ENCODE measurements at regions of chr18 and their contacts with region 1.

Region 1: DNA sequence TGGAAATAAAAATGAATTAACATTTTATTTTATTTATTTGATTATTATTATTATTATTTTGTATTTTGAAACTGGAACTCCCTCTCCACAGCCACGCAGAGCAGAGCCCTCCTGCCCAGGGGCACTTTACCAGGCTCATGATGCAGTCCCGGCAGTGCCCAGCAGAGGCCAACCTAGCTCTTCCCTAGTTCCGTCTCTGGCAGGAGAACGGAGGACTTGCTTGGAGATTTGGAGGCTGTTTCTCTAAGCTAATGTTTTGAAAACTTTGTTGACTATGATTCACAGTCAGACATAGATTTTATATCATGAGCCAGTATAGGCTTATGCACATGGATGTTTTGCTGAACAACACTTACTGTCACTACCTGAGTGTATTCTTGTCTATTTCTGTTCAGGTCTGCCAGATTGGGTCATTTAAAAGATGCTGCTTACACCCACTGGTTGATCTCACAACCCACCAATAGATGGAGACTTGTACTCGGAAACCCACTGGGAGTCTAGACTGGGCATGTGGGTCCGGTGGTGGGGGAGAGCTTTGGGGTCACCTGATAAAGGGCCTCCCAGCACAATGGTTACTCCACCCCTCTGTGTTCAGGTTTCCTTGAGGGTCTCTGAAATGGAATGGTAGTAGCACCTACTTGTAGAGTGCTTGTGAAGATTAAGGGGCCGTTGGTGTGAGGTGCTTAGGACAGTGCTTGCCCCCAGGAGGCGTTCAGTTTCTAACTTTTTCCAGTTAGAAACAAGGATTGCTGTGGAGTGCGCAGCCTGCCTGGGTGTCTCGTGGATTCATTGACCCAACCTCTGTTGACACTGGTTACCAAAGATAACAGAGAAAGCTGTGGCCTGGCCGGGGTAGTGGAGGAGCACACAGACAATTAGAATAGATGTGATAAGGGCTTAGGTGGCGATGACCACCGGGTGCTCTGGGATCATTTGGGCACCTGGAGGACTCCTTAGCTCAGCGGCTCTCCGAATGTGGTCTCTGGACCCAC is 177.3 kb downstream of the HAUS1 start:
- DNase-seq: peak; percentile 55 to 69 (median 65)
- ATAC-seq: peak; percentile 92 to 97 (median 94)
- H3K4me3 ChIP-seq: no peak overlapping the region
- H3K27ac ChIP-seq: no peak overlapping the region
- H3K4me1 ChIP-seq: no peaks in the 10 kb centered on the region
- H3K27me3 ChIP-seq: no peaks in the 10 kb centered on the region
- CTCF ChIP-seq: peak; percentile 85 to 93 (median 88)
- POLR2A ChIP-seq: no peak

Region 2: DNA sequence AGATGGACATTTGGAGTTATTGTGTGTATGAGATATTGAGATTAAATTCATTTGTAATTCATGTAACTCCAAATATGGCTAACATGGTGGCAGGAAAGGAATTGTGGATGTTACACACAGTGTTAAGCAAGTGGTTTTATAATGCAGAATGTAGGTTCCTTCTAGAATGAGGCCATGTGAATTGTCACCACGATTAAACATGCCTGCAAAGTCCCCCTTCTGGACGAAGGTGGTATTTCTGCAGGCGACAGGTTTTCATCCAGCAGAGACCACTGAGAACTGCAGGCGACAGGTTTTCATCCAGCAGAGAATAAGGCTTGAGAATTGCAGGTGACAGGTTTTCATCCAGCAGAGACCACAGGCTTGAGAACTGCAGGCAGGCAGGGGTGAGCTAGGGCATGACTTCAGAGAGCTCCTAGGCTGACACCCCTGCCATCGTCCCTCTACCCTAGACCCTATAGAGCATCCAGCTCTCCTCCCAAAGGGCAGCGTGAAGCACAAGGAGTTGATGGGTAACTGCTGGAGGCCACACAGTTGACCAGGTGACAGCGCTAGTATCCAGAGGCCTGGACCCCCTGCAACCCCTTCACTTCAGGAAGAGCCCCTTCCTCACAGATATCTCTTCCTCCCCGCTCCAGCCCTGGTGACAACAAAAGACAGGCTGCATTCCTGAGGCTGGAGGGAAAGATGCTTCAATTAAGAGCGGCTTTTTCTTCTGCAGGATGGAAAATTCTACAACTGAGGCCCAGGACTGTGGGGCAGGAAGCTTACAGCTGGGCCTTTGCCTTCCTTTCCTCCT is 199.8 kb after region 1 on chr18:
- intact Hi-C with region 1: loop called in 1 of 2 experiments (anchors 5 kb)
- DNase-seq: peak in 1 of 3 donors; percentile 63
- ATAC-seq: peak; percentile 76 to 89 (median 87)
- H3K4me3 ChIP-seq: no peak overlapping the region
- H3K27ac ChIP-seq: no peak overlapping the region
- H3K4me1 ChIP-seq: no peaks in the 10 kb centered on the region
- H3K27me3 ChIP-seq: no peaks in the 10 kb centered on the region
- CTCF ChIP-seq: peak; percentile 65 to 87 (median 76)
- POLR2A ChIP-seq: no peak

Measured in right lobe of liver (tissue), 6 donors.